CD14-positive monocyte (primary cell): ENCODE measurements at regions of chr4 and their contacts with region 1.

Region 1: DNA sequence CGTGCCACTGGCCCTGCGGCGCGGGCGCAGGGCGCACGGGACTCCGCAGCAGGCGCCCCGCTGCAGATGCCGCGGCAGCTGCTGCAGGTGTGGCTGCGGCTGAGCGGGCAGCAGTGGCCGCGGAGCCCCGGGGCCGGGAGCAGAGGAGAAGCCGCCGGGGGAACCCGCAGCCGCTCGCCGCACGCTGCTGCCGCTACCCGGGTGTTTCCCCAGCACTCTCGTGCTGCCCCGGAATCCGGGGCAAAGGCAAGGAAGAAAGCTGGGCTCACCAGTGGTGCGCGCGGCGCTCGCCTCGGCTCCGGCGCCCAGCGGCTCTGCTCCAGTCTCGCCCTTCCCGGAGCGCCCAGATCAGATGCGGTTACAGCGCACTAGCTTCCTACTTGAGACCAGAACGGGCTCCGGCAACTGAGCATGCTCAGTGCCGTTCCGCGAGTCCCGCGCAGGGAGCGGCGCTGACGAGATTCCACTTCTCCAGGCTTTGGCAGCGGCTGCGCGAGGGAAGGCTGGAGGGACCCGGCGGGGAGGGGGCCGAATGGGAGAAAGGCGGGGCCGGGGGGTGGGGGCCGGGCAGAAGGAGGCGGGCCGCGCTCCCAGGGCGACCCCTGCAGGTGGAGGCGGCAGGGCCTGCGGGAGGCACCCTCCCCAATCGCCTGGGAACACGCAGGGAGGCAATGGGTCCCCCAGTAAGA is at the start of gene APBB2:
- DNase-seq: peak; percentile 36 to 80 (median 51)
- H3K4me3 ChIP-seq: peak within 1 kb of the TSS; percentile 33 to 78 (median 70)
- H3K4me3 Mint-ChIP-seq: peak within 1 kb of the TSS; percentile 94
- H3K27ac ChIP-seq: no peak within 1 kb of the TSS
- H3K27ac Mint-ChIP-seq: peak within 1 kb of the TSS in 3 of 7 donors; percentile 8 to 78 (median 67)
- H3K4me1 ChIP-seq: peaks cover 25 to 27% of the 10 kb centered on the region in 2 donors
- H3K4me1 Mint-ChIP-seq: peaks cover 32% of the 10 kb centered on the region
- H3K27me3 ChIP-seq: peaks cover 49 to 52% of the 10 kb centered on the region in 2 donors
- H3K27me3 Mint-ChIP-seq: peaks cover 61 to 70% (median 68%) of the 10 kb centered on the region in 3 donors
- CTCF ChIP-seq: peak; percentile 71
- polyA plus RNA-seq, gene APBB2: 0.15 to 0.33 TPM in 2 of 3 donors, not detected in the other

Region 2: DNA sequence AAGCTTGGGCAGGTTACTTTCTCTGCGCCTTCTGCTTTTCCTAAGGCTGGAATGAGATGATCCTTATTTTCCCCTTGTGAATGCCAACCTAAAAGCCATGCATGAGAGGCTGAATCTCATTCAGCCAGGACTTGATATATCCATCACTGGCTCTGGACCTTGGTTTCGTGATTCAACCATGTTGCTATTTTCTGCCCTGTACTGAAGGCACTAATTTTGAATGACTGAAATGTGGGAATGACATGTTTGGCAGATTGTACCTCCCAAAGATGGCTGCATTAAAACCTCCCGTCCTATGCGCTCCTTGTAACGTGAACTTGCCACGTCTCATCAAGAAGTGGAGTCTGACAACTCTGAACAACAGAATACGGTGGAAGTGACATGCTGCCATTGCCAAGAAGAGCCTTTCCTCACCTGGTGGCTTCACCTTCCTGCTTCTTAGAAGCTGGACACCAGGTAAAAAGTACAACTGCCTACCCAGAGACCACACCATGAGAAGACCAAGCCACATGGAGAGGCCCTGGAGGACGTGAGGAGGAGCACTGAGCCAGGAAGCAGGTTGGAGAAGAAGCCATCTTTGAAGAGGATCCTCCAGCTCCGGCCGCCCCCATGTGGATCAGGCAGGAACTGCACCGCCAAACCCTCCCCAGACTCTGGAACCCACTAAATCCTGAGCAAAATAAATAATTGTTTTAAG is 290.0 kb before region 1 on chr4:
- intact Hi-C with region 1: loop called (anchors 5 to 10 kb)
- DNase-seq: peak; percentile 39 to 61 (median 61)
- H3K4me3 ChIP-seq: no peak overlapping the region
- H3K4me3 Mint-ChIP-seq: peak overlapping the region; percentile 53
- H3K27ac ChIP-seq: no peak overlapping the region
- H3K27ac Mint-ChIP-seq: peak overlapping the region in 2 of 7 donors; percentile 21 to 74
- H3K4me1 ChIP-seq: peaks cover 0 to 2% of the 10 kb centered on the region in 2 donors
- H3K4me1 Mint-ChIP-seq: peaks cover 5% of the 10 kb centered on the region
- H3K27me3 ChIP-seq: no peaks in the 10 kb centered on the region
- H3K27me3 Mint-ChIP-seq: peaks cover 0 to 5% (median 0%) of the 10 kb centered on the region in 3 donors
- CTCF ChIP-seq: peak; percentile 97

Region 3: GRCh38 chr4:40976343-40976742 is 237.9 kb before region 1 on chr4:
- intact Hi-C with region 1: loop called (anchors 5 to 10 kb)
- DNase-seq: peak in 2 of 3 donors; percentile 25 to 44
- H3K4me3 ChIP-seq: no peak overlapping the region
- H3K4me3 Mint-ChIP-seq: no peak overlapping the region
- H3K27ac ChIP-seq: no peak overlapping the region
- H3K27ac Mint-ChIP-seq: no peak overlapping the region
- H3K4me1 ChIP-seq: no peaks in the 10 kb centered on the region
- H3K4me1 Mint-ChIP-seq: peaks cover 2% of the 10 kb centered on the region
- H3K27me3 ChIP-seq: no peaks in the 10 kb centered on the region
- H3K27me3 Mint-ChIP-seq: peaks cover 0 to 5% (median 0%) of the 10 kb centered on the region in 3 donors
- CTCF ChIP-seq: peak; percentile 79

Region 4: GRCh38 chr4:41776465-41776864 is 562.2 kb after region 1 on chr4:
- intact Hi-C with region 1: no loop called
- DNase-seq: no peak
- H3K4me3 ChIP-seq: no peak overlapping the region
- H3K4me3 Mint-ChIP-seq: no peak overlapping the region
- H3K27ac ChIP-seq: no peak overlapping the region
- H3K27ac Mint-ChIP-seq: no peak overlapping the region
- H3K4me1 ChIP-seq: no peaks in the 10 kb centered on the region
- H3K4me1 Mint-ChIP-seq: no peaks in the 10 kb centered on the region
- H3K27me3 ChIP-seq: peaks cover 0 to 2% of the 10 kb centered on the region in 2 donors
- H3K27me3 Mint-ChIP-seq: peaks cover 0 to 22% (median 5%) of the 10 kb centered on the region in 3 donors
- CTCF ChIP-seq: no peak